MCF 10A (cell line): ENCODE measurements at regions of chr11 and their contacts with region 1.

Region 1: GRCh38 chr11:15988693-15989231 is 367.6 kb downstream of the SOX6 start:
- DNase-seq: peak; percentile 11
- H3K4me3 Mint-ChIP-seq: no peak overlapping the region
- H3K27ac Mint-ChIP-seq: no peak overlapping the region
- H3K4me1 Mint-ChIP-seq: no peaks in the 10 kb centered on the region
- H3K27me3 Mint-ChIP-seq: no peaks in the 10 kb centered on the region
- CTCF ChIP-seq: peak; percentile 7

Region 2: GRCh38 chr11:15852179-15852578 is 136.6 kb before region 1 on chr11:
- CTCF ChIA-PET with region 1: interaction called, 3 read pairs
- POLR2A ChIA-PET with region 1: no interaction called
- intact Hi-C with region 1: loop called (anchors 1 kb)
- DNase-seq: peak; percentile 43
- H3K4me3 Mint-ChIP-seq: no peak overlapping the region
- H3K27ac Mint-ChIP-seq: no peak overlapping the region
- H3K4me1 Mint-ChIP-seq: no peaks in the 10 kb centered on the region
- H3K27me3 Mint-ChIP-seq: no peaks in the 10 kb centered on the region
- CTCF ChIP-seq: peak; percentile 56

Region 3: DNA sequence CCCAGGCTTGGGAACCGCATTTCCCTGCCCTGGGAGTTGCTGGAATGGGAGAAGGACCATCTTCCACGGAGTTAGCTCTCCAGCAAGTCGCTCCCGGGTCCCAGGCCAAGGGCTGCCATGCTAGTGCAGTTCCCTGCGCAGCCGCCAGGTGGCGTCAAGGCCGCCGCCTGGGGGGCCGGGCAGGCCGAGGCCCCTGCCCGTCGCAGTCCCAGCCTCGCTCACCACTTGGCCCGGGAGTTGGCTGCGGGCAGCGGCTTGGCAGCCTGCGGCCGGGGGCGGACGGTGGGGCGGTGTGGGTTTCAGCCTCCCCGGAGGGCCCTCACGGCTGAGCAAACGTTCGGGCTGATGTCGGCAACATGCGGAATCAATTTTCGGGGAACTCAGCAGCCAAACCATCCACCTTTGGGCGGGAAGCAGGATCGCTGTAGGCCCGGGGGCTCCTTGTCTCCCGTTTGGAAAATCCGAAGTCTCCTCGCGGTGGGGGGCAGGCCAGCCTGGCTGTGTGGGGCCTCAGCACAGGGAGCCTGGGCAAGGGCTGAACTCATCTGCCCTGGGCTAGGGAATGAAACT is 47.5 kb before region 1 on chr11:
- CTCF ChIA-PET with region 1: no interaction called
- POLR2A ChIA-PET with region 1: no interaction called
- intact Hi-C with region 1: no loop called
- DNase-seq: no peak
- H3K4me3 Mint-ChIP-seq: no peak overlapping the region
- H3K27ac Mint-ChIP-seq: no peak overlapping the region
- H3K4me1 Mint-ChIP-seq: no peaks in the 10 kb centered on the region
- H3K27me3 Mint-ChIP-seq: no peaks in the 10 kb centered on the region
- CTCF ChIP-seq: peak; percentile 82